Activated naive CD8-positive, alpha-beta T cell treated with anti-CD3 and anti-CD28 coated beads, Interleukin-2, amount 10 ng/mL, durations not matched to agents 7 days and 5 days (primary cell): ENCODE measurements at regions of chr3 and their contacts with region 1.

Region 1: GRCh38 chr3:9211155-9211950 is 38.1 kb downstream of the SRGAP3 start:
- DNase-seq: no peak
- ATAC-seq: peak; percentile 66
- H3K4me3 Mint-ChIP-seq: no peak overlapping the region
- H3K27ac Mint-ChIP-seq: no peak overlapping the region
- H3K4me1 Mint-ChIP-seq: peaks cover 11% of the 10 kb centered on the region
- H3K27me3 Mint-ChIP-seq: no peaks in the 10 kb centered on the region

Region 2: DNA sequence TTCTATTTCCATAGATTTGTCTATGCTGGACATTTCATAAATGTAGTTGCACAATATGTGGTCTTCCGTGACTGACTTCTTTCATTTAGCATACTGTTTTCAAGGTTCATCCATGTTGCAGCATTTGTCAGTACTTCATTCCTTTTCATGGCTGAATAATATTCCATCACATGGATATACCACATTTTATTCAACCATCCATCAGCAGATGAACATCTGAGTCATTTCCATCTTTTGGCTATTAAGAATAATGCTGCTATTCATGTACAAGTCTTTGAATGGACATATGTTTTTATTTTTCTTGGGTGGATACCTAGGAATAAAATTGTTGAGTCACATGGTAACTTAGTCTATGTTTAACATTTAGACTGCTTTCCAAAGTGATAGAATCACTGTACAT is 148.8 kb before region 1 on chr3:
- POLR2A ChIA-PET with region 1: interaction called, 10 read pairs
- DNase-seq: no peak
- ATAC-seq: no peak
- H3K4me3 Mint-ChIP-seq: no peak overlapping the region
- H3K27ac Mint-ChIP-seq: no peak overlapping the region
- H3K4me1 Mint-ChIP-seq: no peaks in the 10 kb centered on the region
- H3K27me3 Mint-ChIP-seq: no peaks in the 10 kb centered on the region